HCT116 (cell line): ENCODE measurements at regions of chr3 and their contacts with region 1.

Region 1: GRCh38 chr3:132822266-132822665 is 100.1 kb upstream of the NPHP3 start:
- DNase-seq: no peak
- ATAC-seq: no peak
- H3K4me3 ChIP-seq: no peak overlapping the region
- H3K27ac ChIP-seq: no peak overlapping the region
- H3K4me1 ChIP-seq: no peaks in the 10 kb centered on the region
- H3K27me3 ChIP-seq: peaks cover 34% of the 10 kb centered on the region
- CTCF ChIP-seq: no peak
- POLR2A ChIP-seq: no peak
- RAD21 ChIP-seq: no peak

Region 2: GRCh38 chr3:133354721-133355120 is 532.5 kb after region 1 on chr3:
- CTCF ChIA-PET with region 1: no interaction called
- POLR2A ChIA-PET with region 1: no interaction called
- RAD21 ChIA-PET with region 1: no interaction called
- intact Hi-C with region 1: loop called (anchors 10 kb)
- DNase-seq: no peak
- ATAC-seq: no peak
- H3K4me3 ChIP-seq: no peak overlapping the region
- H3K27ac ChIP-seq: no peak overlapping the region
- H3K4me1 ChIP-seq: no peaks in the 10 kb centered on the region
- H3K27me3 ChIP-seq: peaks cover 47% of the 10 kb centered on the region
- CTCF ChIP-seq: no peak
- POLR2A ChIP-seq: no peak
- RAD21 ChIP-seq: no peak